ENCODE measurements at regions of chr6 and their contacts with region 1.

Region 1: GRCh38 chr6:27479319-27480182 is 6.6 kb upstream of the ZNF184 start:
- DNase-seq: peak; percentile 81
- H3K4me3 Mint-ChIP-seq: no peak overlapping the region
- H3K27ac Mint-ChIP-seq: no peak overlapping the region
- H3K4me1 Mint-ChIP-seq: no peaks in the 10 kb centered on the region
- H3K27me3 Mint-ChIP-seq: peaks cover 10% of the 10 kb centered on the region

Region 2: GRCh38 chr6:27177485-27178406 is 301.8 kb before region 1 on chr6:
- intact Hi-C with region 1: loop called (anchors 1 kb)
- DNase-seq: peak; percentile 66
- H3K4me3 Mint-ChIP-seq: peak overlapping the region; percentile 95
- H3K27ac Mint-ChIP-seq: peak overlapping the region; percentile 93
- H3K4me1 Mint-ChIP-seq: peaks cover 7% of the 10 kb centered on the region
- H3K27me3 Mint-ChIP-seq: peaks cover 36% of the 10 kb centered on the region

Region 3: DNA sequence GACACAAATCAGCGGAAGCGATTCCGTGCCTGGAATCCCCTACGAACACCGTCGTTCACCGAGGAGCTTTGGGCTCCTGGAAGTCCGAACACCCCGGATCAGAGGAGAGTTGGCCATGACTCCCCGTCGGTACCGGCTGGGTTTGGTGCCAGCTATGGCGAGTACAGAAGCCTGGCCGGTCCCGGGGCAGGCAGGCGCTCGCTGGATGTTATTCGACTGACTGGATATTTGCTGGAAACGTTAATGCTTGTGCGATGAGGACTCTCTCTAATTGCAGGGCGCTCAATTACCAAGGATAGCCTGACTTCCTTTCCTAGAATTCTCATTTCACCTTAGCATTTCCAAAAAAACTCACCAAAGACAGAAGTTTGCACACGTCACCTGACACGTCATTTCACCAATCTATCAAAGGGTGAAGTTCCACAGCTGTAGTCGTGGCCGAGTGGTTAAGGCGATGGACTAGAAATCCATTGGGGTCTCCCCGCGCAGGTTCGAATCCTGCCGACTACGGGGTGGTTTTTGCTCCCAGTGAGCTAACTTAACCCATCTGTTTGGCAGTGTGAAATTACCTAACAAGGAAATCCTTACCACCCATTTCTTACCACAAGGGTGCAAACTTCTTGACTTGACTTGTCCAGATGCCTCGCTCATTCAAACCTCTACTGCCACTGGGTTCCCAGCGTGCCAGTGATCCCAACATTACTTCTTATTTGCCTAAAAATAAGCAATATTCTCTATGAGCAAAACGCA is 16.0 kb after region 1 on chr6:
- intact Hi-C with region 1: loop called (anchors 1 kb)
- DNase-seq: peak; percentile 51
- H3K4me3 Mint-ChIP-seq: peak overlapping the region; percentile 83
- H3K27ac Mint-ChIP-seq: peak overlapping the region; percentile 73
- H3K4me1 Mint-ChIP-seq: peaks cover 16% of the 10 kb centered on the region
- H3K27me3 Mint-ChIP-seq: peaks cover 58% of the 10 kb centered on the region

Region 4: GRCh38 chr6:27518881-27519795 is 39.6 kb after region 1 on chr6:
- intact Hi-C with region 1: loop called (anchors 1 kb)
- DNase-seq: peak; percentile 40
- H3K4me3 Mint-ChIP-seq: peak overlapping the region; percentile 89
- H3K27ac Mint-ChIP-seq: peak overlapping the region; percentile 86
- H3K4me1 Mint-ChIP-seq: peaks cover 16% of the 10 kb centered on the region
- H3K27me3 Mint-ChIP-seq: peaks cover 25% of the 10 kb centered on the region

Measured in activated T-helper 1 cell treated with anti-CD3 and anti-CD28 coated beads, Interleukin-12 subunit alpha, Interleukin-12 subunit beta, Interleukin-2, Interleukin-4 antibody, amounts not matched to agents 30 ng/mL and 10 ng/mL and 1 ng/mL, durations not matched to agents 14 hours and 24 hours and 36 hours (primary cell).